HepG2 (cell line): ENCODE measurements at regions of chr12 and their contacts with region 1.

Region 1: DNA sequence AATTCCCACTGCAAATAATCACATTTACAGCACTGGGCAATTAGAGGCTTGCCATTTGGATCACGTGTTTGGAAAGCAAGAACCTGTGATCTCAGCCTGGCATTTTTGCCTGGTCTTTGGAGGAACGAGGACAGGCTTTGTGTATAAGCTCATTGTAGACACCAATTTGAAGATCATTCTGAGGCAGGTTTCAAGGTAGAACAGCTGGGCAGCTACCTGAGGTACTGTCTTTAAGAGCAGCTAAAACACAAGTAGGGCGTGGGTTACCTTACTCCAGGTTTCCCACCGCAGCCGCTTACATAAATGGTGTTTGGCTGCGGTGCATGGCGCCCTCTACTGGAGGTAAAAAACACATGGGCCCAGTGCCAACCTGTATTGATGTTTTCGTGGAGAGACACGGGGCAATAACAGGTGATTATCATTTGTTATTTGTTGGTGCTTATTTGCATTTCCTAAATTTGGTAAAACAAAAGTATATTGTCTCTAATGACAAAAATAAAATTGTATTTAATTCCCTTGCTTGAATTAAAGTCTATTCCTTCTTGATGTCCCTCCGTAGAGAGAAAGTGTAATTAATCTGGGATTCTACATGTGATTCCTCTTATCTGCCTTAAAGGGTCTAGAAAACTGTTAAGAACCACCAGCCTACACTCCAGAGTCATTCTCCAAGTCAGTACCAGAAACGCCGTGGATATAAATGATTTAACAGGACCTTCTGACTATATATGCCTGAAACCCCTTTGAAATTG is 69.7 kb downstream of the SVOP start:
- DNase-seq: peak; percentile 60
- ATAC-seq: peak; percentile 85
- H3K4me3 ChIP-seq: peak overlapping the region in 1 of 3 experiments; percentile 47; a peak in 1 of 6 replicates
- H3K27ac ChIP-seq: no peak overlapping the region
- H3K4me1 ChIP-seq: peaks cover 20% of the 10 kb centered on the region
- H3K27me3 ChIP-seq: no peaks in the 10 kb centered on the region; a peak in 1 of 5 replicates
- CTCF ChIP-seq: peak; percentile 90
- EP300 ChIP-seq: no peak
- POLR2A ChIP-seq: no peak
- RAD21 ChIP-seq: peak; percentile 79

Region 2: DNA sequence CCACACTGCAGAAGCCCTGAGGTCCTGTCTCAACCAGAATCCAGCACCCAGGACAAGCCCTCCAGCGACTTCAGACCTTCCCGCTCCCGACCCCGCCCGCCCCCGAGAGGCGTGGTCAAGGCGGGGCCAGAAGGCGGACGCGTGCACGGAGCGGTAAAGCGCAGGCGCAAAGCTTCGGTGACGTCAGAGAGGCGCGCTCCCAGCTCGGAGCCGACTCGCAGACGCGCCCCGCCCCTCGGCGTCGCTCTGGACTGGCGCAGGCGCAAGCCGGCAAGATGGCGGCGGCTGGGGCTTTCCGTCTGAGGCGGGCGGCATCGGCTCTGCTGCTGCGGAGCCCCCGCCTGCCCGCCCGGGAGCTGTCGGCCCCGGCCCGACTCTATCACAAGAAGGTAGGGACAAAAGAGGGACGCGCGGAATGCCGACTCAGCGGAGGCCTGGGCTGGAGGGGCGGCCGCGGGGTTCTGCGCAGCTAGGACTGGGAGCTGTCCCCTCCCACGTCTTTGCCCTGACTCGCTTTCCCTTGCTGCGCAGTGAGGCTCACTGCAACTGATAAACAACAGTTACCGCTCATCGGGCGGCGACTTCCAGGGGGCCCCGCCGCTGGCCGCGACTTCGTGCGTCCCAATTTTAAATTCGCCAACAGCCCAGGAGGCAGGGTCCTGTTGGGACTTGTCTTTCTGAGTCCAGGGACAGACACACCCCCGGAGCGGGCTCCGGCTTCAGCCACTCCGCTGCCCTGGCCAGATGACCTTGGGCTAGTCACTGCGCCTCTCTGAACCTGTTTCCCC is 388.6 kb before region 1 on chr12 and contains the start of gene ISCU:
- CTCF ChIA-PET with region 1: no interaction called
- POLR2A ChIA-PET with region 1: no interaction called
- in situ Hi-C with region 1: no loop called
- intact Hi-C with region 1: loop called (anchors 2 kb)
- DNase-seq: peak; percentile 93
- ATAC-seq: peak; percentile 83
- H3K4me3 ChIP-seq: peak within 1 kb of the TSS; percentile 96 to 100 (median 99)
- H3K27ac ChIP-seq: peak within 1 kb of the TSS; percentile 97
- H3K4me1 ChIP-seq: peaks cover 30% of the 10 kb centered on the region
- H3K27me3 ChIP-seq: no peaks in the 10 kb centered on the region; a peak in 1 of 5 replicates
- CTCF ChIP-seq: no peak; the same call in 1 of the 2 replicates
- EP300 ChIP-seq: no peak
- POLR2A ChIP-seq: peak; percentile 63 to 78
- RAD21 ChIP-seq: peak; percentile 31; the same call in 1 of the 2 replicates
- total RNA-seq, gene ISCU: 107 and 131 TPM in 2 replicates

Region 3: GRCh38 chr12:108664338-108665258 is 286.6 kb before region 1 on chr12:
- CTCF ChIA-PET with region 1: interaction called, 3 read pairs
- POLR2A ChIA-PET with region 1: no interaction called
- in situ Hi-C with region 1: no loop called
- intact Hi-C with region 1: loop called (anchors 2 kb)
- DNase-seq: peak; percentile 92
- ATAC-seq: peak; percentile 86
- H3K4me3 ChIP-seq: peak overlapping the region in 1 of 3 experiments; percentile 8; a peak in 1 of 6 replicates
- H3K27ac ChIP-seq: peak overlapping the region; percentile 73
- H3K4me1 ChIP-seq: peaks cover 54% of the 10 kb centered on the region
- H3K27me3 ChIP-seq: no peaks in the 10 kb centered on the region
- CTCF ChIP-seq: peak; percentile 95
- EP300 ChIP-seq: peak in 1 of 2 experiments; percentile 82; a peak in 2 of 4 replicates
- POLR2A ChIP-seq: no peak
- RAD21 ChIP-seq: peak; percentile 90

Region 4: GRCh38 chr12:108803428-108804105 is 147.6 kb before region 1 on chr12:
- CTCF ChIA-PET with region 1: no interaction called
- POLR2A ChIA-PET with region 1: no interaction called
- in situ Hi-C with region 1: no loop called
- intact Hi-C with region 1: loop called (anchors 10 kb)
- DNase-seq: peak; percentile 75
- ATAC-seq: peak; percentile 89
- H3K4me3 ChIP-seq: no peak overlapping the region
- H3K27ac ChIP-seq: peak overlapping the region; percentile 25
- H3K4me1 ChIP-seq: peaks cover 6% of the 10 kb centered on the region; the same call in 1 of the 2 replicates
- H3K27me3 ChIP-seq: no peaks in the 10 kb centered on the region
- CTCF ChIP-seq: peak; percentile 94
- EP300 ChIP-seq: no peak
- POLR2A ChIP-seq: no peak
- RAD21 ChIP-seq: peak; percentile 91

Region 5: GRCh38 chr12:108821407-108822397 is 129.5 kb before region 1 on chr12:
- CTCF ChIA-PET with region 1: no interaction called
- POLR2A ChIA-PET with region 1: no interaction called
- in situ Hi-C with region 1: no loop called
- intact Hi-C with region 1: no loop called
- DNase-seq: no peak
- ATAC-seq: no peak
- H3K4me3 ChIP-seq: no peak overlapping the region
- H3K27ac ChIP-seq: no peak overlapping the region
- H3K4me1 ChIP-seq: peaks cover 8% of the 10 kb centered on the region
- H3K27me3 ChIP-seq: no peaks in the 10 kb centered on the region
- CTCF ChIP-seq: no peak
- EP300 ChIP-seq: no peak
- POLR2A ChIP-seq: no peak
- RAD21 ChIP-seq: no peak

Region 6: DNA sequence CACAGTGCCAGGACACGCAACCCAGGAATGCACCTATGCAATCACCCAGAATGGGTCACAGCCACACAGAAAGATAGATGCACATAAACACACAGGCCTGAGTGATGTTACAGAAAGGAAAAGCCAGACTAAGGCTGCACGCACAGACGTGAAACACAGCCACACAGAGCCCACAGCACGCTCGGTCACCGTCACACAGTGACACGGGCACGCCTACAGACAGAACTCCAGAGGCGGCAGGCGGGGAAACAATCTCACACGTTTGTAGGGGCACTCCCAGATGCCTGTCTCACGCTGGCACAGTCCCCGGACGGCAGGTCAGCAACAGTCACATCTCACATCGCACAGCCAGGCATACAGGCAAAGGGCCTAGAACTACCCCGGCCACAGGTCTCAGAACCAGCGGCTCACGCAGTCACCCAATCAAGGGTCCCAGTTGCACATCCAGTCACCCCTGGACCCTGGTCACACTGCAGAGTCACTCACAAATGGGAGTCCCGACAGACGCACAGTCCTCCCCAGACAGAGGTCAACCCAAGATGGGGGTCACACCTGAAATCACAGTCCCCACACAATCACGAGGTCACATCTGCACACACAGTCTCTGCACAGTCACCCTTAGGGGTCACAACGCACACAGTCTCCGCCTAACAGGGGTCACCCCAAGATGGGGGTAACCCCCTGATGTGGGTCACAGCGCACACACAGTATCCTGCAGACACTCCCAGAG is 94.6 kb before region 1 on chr12:
- CTCF ChIA-PET with region 1: no interaction called
- POLR2A ChIA-PET with region 1: no interaction called
- in situ Hi-C with region 1: no loop called
- intact Hi-C with region 1: loop called (anchors 1 kb)
- DNase-seq: peak; percentile 25
- ATAC-seq: peak; percentile 72
- H3K4me3 ChIP-seq: peak overlapping the region; percentile 57 to 89 (median 70)
- H3K27ac ChIP-seq: peak overlapping the region; percentile 52
- H3K4me1 ChIP-seq: peaks cover 32% of the 10 kb centered on the region
- H3K27me3 ChIP-seq: peaks cover 4 to 6% of the 10 kb centered on the region in 2 experiments; a peak in 1 of 5 replicates
- CTCF ChIP-seq: peak; percentile 14; the same call in 1 of the 2 replicates
- EP300 ChIP-seq: no peak
- POLR2A ChIP-seq: peak; percentile 26 to 52; a peak in 2 of 4 replicates
- RAD21 ChIP-seq: no peak

Region 7: GRCh38 chr12:108884116-108885012 is 66.8 kb before region 1 on chr12:
- CTCF ChIA-PET with region 1: interaction called, 16 read pairs
- POLR2A ChIA-PET with region 1: no interaction called
- in situ Hi-C with region 1: no loop called
- intact Hi-C with region 1: loop called (anchors 1 kb)
- DNase-seq: peak; percentile 14
- ATAC-seq: no peak
- H3K4me3 ChIP-seq: no peak overlapping the region
- H3K27ac ChIP-seq: no peak overlapping the region
- H3K4me1 ChIP-seq: peaks cover 12% of the 10 kb centered on the region
- H3K27me3 ChIP-seq: no peaks in the 10 kb centered on the region
- CTCF ChIP-seq: peak; percentile 66
- EP300 ChIP-seq: no peak
- POLR2A ChIP-seq: no peak
- RAD21 ChIP-seq: peak; percentile 45

Region 8: DNA sequence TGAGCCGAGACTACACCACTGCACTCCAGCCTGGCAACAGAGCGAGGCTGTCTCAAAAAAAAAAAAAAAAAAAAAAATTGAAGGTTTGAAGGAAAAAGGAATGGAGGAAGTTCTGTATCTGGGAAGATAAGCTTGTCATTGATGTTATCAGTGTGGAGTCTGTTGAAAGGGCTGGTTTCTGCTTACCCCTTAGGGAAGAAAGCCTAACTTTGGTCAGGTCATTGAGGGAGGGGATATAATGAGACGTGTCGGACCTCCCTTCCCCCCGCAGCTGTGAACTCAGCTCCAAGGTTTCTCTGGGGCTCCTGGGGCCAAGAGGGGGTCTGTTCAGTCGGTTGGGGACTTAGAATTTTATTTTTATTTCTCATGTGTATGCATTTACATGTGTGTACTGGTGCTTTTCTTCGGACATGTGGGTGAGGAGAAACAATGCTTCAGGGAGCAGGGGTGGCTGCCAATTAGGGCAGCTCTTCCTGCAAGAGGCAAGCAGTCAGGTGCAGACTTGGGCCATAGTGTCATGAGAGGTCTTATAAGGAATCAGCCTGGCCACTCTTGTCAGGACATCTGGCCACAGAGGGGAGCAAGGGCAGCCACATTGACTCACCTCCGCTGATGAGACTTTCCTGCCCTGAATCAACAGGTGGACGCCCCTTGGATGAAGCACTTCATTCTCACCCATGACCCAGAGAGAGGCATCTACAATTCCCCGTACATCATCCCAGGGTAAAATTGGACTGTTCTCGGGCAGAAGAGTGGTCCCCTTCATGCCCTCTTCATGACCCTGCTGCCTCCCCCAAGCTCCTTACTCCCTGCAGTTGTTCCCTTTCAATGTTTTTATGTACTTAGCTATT is 54.6 kb before region 1 on chr12:
- CTCF ChIA-PET with region 1: no interaction called
- POLR2A ChIA-PET with region 1: no interaction called
- in situ Hi-C with region 1: no loop called
- intact Hi-C with region 1: no loop called
- DNase-seq: no peak
- ATAC-seq: no peak
- H3K4me3 ChIP-seq: no peak overlapping the region
- H3K27ac ChIP-seq: no peak overlapping the region
- H3K4me1 ChIP-seq: no peaks in the 10 kb centered on the region
- H3K27me3 ChIP-seq: no peaks in the 10 kb centered on the region
- CTCF ChIP-seq: no peak
- EP300 ChIP-seq: no peak
- POLR2A ChIP-seq: no peak
- RAD21 ChIP-seq: no peak

Region 9: DNA sequence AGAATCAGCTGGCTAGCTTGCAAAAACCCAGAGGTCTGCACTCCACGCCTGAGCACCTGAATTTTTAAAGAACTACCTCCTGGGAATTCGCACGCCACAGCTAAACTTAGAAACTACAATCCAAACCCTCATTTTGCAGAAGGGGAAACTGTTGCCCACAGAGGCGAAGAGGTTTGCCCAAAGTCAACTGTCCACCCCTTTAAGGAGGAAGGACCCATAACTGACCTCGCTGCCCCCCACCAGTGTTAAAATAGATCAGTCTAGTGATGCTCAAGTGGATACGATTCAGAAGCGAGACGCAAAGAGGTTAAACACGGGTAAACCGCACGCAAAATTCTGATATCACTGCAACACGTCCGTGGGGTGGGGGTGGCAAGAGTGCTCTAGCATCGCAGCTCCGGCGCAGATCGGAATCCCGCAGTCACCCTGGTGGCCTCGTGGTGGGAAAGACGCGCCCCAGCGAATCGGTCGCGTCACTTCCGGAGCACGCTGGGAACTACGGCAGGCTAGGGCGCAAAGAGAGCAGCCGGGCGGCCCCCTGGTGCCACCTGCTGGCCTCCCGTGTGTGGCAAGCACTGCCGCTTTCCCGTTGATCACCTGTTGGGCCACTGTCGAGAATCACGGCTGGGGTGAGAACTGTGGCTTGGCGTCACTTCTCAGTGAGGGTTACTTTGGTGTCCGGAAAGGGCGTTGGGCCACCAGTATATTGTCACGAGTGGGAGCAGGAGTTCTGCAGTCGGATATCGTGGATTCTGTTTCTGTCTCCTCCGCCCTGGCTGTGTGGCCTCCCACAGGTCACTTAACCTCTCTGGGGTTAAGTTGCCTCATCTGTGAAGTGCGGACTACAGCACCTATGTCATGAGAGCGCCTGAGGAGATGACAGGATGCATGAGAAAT is 142.1 kb after region 1 on chr12 and contains the start of gene ALKBH2:
- CTCF ChIA-PET with region 1: interaction called, 10 read pairs
- POLR2A ChIA-PET with region 1: no interaction called
- in situ Hi-C with region 1: loop called (anchors 5 kb)
- intact Hi-C with region 1: loop called (anchors 1 kb)
- DNase-seq: peak; percentile 85
- ATAC-seq: peak; percentile 57
- H3K4me3 ChIP-seq: peak within 1 kb of the TSS; percentile 25 to 66 (median 37)
- H3K27ac ChIP-seq: peak within 1 kb of the TSS; percentile 52
- H3K4me1 ChIP-seq: peaks cover 59% of the 10 kb centered on the region
- H3K27me3 ChIP-seq: no peaks in the 10 kb centered on the region
- CTCF ChIP-seq: peak; percentile 100
- EP300 ChIP-seq: no peak; a peak in 1 of 4 replicates
- POLR2A ChIP-seq: peak; percentile 86 to 92
- RAD21 ChIP-seq: peak; percentile 100
- total RNA-seq, gene ALKBH2: 40.5 and 46.7 TPM in 2 replicates